Caco-2 (cell line): ENCODE measurements at regions of chr16 and their contacts with region 1.

Region 1: GRCh38 chr16:19886073-19886941 is 1.7 kb upstream of the GPRC5B start:
- DNase-seq: peak; percentile 69 to 79
- H3K4me3 ChIP-seq: no peak overlapping the region
- H3K4me3 Mint-ChIP-seq: peak overlapping the region; percentile 71
- H3K27ac Mint-ChIP-seq: no peak overlapping the region
- H3K4me1 ChIP-seq: no peaks in the 10 kb centered on the region
- H3K4me1 Mint-ChIP-seq: peaks cover 5% of the 10 kb centered on the region
- H3K27me3 ChIP-seq: no peaks in the 10 kb centered on the region
- H3K27me3 Mint-ChIP-seq: no peaks in the 10 kb centered on the region
- CTCF ChIP-seq: peak; percentile 94 to 96

Region 2: DNA sequence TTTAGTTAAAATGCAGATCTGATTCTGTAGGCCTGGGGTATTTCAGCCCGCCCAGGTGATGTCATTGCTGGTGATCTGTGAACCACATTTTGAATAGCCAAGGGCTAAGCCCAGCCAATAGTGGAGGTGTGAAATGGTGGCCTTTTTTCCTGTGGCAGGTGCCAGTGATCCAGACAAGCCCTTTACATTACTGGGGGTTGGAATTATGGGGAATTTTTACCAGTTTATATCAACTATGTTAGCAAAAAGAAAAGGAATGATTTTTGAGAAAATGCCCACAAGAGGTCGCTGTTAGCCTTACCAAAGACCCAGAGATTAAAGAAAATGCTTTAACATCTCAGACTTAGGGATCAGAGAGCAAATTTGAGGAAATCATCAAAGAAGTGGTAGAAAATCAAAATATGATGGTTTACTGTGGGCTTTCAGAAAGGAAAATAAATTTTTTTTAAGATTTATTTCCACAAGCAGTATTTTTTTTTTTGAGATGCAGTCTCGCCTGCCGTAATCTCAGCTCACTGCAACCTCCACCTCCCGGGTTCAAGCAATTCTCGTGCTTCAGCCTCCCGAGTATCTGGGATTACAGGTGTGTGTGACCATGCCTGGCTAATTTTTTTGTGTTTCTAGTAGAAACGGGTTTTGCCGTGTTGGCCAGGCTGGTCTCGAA is 326.9 kb before region 1 on chr16:
- CTCF ChIA-PET with region 1: no interaction called
- POLR2A ChIA-PET with region 1: no interaction called
- intact Hi-C with region 1: loop called (anchors 1 kb)
- DNase-seq: peak in 1 of 2 experiments; percentile 35
- H3K4me3 ChIP-seq: no peak overlapping the region
- H3K4me3 Mint-ChIP-seq: no peak overlapping the region
- H3K27ac Mint-ChIP-seq: no peak overlapping the region
- H3K4me1 ChIP-seq: no peaks in the 10 kb centered on the region
- H3K4me1 Mint-ChIP-seq: no peaks in the 10 kb centered on the region
- H3K27me3 ChIP-seq: no peaks in the 10 kb centered on the region
- H3K27me3 Mint-ChIP-seq: no peaks in the 10 kb centered on the region
- CTCF ChIP-seq: peak; percentile 35 to 47

Region 3: GRCh38 chr16:19601083-19601976 is 285.0 kb before region 1 on chr16:
- CTCF ChIA-PET with region 1: interaction called, 10 read pairs
- POLR2A ChIA-PET with region 1: no interaction called
- intact Hi-C with region 1: loop called (anchors 1 kb)
- DNase-seq: peak in 1 of 2 experiments; percentile 50
- H3K4me3 ChIP-seq: no peak overlapping the region
- H3K4me3 Mint-ChIP-seq: no peak overlapping the region
- H3K27ac Mint-ChIP-seq: no peak overlapping the region
- H3K4me1 ChIP-seq: peaks cover 6% of the 10 kb centered on the region; the same call in 1 of the 2 replicates
- H3K4me1 Mint-ChIP-seq: no peaks in the 10 kb centered on the region
- H3K27me3 ChIP-seq: no peaks in the 10 kb centered on the region
- H3K27me3 Mint-ChIP-seq: no peaks in the 10 kb centered on the region
- CTCF ChIP-seq: peak; percentile 52 to 77

Region 4: GRCh38 chr16:19717771-19718602 is 168.3 kb before region 1 on chr16 and contains the starts of genes IQCK and KNOP1:
- CTCF ChIA-PET with region 1: no interaction called
- POLR2A ChIA-PET with region 1: no interaction called
- intact Hi-C with region 1: loop called (anchors 10 kb)
- DNase-seq: peak; percentile 88 to 89
- H3K4me3 ChIP-seq: peak within 1 kb of the TSS; percentile 97
- H3K4me3 Mint-ChIP-seq: peak within 1 kb of the TSS; percentile 91
- H3K27ac Mint-ChIP-seq: peak within 1 kb of the TSS; percentile 88
- H3K4me1 ChIP-seq: peaks cover 17% of the 10 kb centered on the region
- H3K4me1 Mint-ChIP-seq: peaks cover 18% of the 10 kb centered on the region
- H3K27me3 ChIP-seq: no peaks in the 10 kb centered on the region
- H3K27me3 Mint-ChIP-seq: no peaks in the 10 kb centered on the region
- CTCF ChIP-seq: no peak
- total RNA-seq, gene IQCK: 1.7 and 2.0 TPM in 2 replicates
- total RNA-seq, gene KNOP1: 29.3 and 31.4 TPM in 2 replicates

Region 5: DNA sequence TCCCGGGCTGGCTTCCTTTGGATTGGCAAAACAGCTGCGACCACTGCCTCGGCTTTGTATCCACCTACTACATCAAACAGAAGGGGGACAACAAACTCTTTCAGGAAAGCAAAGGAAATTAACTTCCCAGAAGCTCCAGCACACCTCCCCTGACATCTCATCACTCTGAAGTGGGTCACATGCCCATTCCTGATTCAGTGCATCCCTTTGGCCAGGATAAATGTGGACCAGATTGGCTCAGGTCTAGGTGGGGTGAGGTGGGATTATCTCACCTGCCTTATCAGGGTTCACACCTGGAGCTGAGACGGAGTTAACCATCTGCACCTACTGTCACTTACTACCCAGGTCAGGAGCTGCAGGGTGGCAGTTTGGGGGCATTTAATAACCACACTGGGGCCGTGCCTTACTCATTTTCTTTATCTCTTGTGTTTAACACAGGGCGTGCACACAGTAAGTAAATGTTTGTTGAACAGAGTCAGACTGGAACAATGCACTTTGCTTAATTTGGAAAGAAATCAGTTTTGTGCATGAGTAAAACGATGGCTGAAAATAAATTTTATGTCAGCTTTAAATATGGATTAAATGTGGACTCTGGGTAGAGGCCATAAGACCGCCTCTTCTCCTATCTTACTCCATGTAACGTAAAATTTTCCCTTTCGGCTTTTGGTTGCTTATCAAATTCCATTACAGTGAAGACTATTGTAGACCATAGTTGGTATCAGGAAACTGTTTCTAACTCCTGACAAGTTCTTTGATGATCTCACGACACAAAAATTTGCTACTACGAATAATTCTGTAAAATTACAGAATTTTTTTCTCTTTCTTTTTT is 132.3 kb before region 1 on chr16:
- CTCF ChIA-PET with region 1: no interaction called
- POLR2A ChIA-PET with region 1: no interaction called
- intact Hi-C with region 1: loop called (anchors 10 kb)
- DNase-seq: peak in 1 of 2 experiments; percentile 5
- H3K4me3 ChIP-seq: no peak overlapping the region
- H3K4me3 Mint-ChIP-seq: peak overlapping the region; percentile 43
- H3K27ac Mint-ChIP-seq: peak overlapping the region; percentile 73
- H3K4me1 ChIP-seq: peaks cover 41% of the 10 kb centered on the region
- H3K4me1 Mint-ChIP-seq: peaks cover 7% of the 10 kb centered on the region
- H3K27me3 ChIP-seq: no peaks in the 10 kb centered on the region
- H3K27me3 Mint-ChIP-seq: no peaks in the 10 kb centered on the region
- CTCF ChIP-seq: no peak